ENCODE measurements at regions of chr3 and their contacts with region 1.

Region 1: GRCh38 chr3:131033480-131034080 is 6.9 kb downstream of the NEK11 start:
- DNase-seq: peak in 3 of 9 experiments; percentile 39 to 75 (median 67)
- ATAC-seq: peak; percentile 87
- H3K4me3 ChIP-seq: no peak overlapping the region
- H3K4me3 Mint-ChIP-seq: no peak overlapping the region
- H3K27ac ChIP-seq: no peak overlapping the region
- H3K27ac Mint-ChIP-seq: no peak overlapping the region
- H3K4me1 ChIP-seq: no peaks in the 10 kb centered on the region
- H3K4me1 Mint-ChIP-seq: no peaks in the 10 kb centered on the region
- H3K27me3 ChIP-seq: no peaks in the 10 kb centered on the region
- H3K27me3 Mint-ChIP-seq: no peaks in the 10 kb centered on the region
- CTCF ChIP-seq: peak; percentile 92

Region 2: GRCh38 chr3:130779031-130779430 is 254.5 kb before region 1 on chr3:
- CTCF ChIA-PET with region 1: no interaction called
- POLR2A ChIA-PET with region 1: no interaction called
- intact Hi-C with region 1: no loop called
- DNase-seq: no peak
- ATAC-seq: no peak
- H3K4me3 ChIP-seq: no peak overlapping the region
- H3K4me3 Mint-ChIP-seq: no peak overlapping the region
- H3K27ac ChIP-seq: no peak overlapping the region
- H3K27ac Mint-ChIP-seq: no peak overlapping the region
- H3K4me1 ChIP-seq: no peaks in the 10 kb centered on the region
- H3K4me1 Mint-ChIP-seq: no peaks in the 10 kb centered on the region
- H3K27me3 ChIP-seq: peaks cover 0 to 3% of the 10 kb centered on the region in 2 experiments
- H3K27me3 Mint-ChIP-seq: peaks cover 7% of the 10 kb centered on the region
- CTCF ChIP-seq: no peak

Region 3: GRCh38 chr3:131142580-131142979 is 109.0 kb after region 1 on chr3:
- CTCF ChIA-PET with region 1: no interaction called
- POLR2A ChIA-PET with region 1: no interaction called
- intact Hi-C with region 1: loop called in 1 of 2 experiments (anchors 1 kb)
- DNase-seq: no peak
- ATAC-seq: no peak
- H3K4me3 ChIP-seq: no peak overlapping the region
- H3K4me3 Mint-ChIP-seq: no peak overlapping the region
- H3K27ac ChIP-seq: no peak overlapping the region
- H3K27ac Mint-ChIP-seq: no peak overlapping the region
- H3K4me1 ChIP-seq: no peaks in the 10 kb centered on the region
- H3K4me1 Mint-ChIP-seq: no peaks in the 10 kb centered on the region
- H3K27me3 ChIP-seq: no peaks in the 10 kb centered on the region
- H3K27me3 Mint-ChIP-seq: no peaks in the 10 kb centered on the region
- CTCF ChIP-seq: no peak

Region 4: GRCh38 chr3:131794766-131795388 is 761.3 kb after region 1 on chr3:
- CTCF ChIA-PET with region 1: interaction called, 10 read pairs
- POLR2A ChIA-PET with region 1: no interaction called
- intact Hi-C with region 1: loop called (anchors 5 kb)
- DNase-seq: peak in 2 of 9 experiments; percentile 33 to 50
- ATAC-seq: no peak
- H3K4me3 ChIP-seq: no peak overlapping the region
- H3K4me3 Mint-ChIP-seq: no peak overlapping the region
- H3K27ac ChIP-seq: no peak overlapping the region
- H3K27ac Mint-ChIP-seq: no peak overlapping the region
- H3K4me1 ChIP-seq: no peaks in the 10 kb centered on the region
- H3K4me1 Mint-ChIP-seq: peaks cover 5% of the 10 kb centered on the region
- H3K27me3 ChIP-seq: no peaks in the 10 kb centered on the region
- H3K27me3 Mint-ChIP-seq: peaks cover 10% of the 10 kb centered on the region
- CTCF ChIP-seq: peak; percentile 67

Region 5: DNA sequence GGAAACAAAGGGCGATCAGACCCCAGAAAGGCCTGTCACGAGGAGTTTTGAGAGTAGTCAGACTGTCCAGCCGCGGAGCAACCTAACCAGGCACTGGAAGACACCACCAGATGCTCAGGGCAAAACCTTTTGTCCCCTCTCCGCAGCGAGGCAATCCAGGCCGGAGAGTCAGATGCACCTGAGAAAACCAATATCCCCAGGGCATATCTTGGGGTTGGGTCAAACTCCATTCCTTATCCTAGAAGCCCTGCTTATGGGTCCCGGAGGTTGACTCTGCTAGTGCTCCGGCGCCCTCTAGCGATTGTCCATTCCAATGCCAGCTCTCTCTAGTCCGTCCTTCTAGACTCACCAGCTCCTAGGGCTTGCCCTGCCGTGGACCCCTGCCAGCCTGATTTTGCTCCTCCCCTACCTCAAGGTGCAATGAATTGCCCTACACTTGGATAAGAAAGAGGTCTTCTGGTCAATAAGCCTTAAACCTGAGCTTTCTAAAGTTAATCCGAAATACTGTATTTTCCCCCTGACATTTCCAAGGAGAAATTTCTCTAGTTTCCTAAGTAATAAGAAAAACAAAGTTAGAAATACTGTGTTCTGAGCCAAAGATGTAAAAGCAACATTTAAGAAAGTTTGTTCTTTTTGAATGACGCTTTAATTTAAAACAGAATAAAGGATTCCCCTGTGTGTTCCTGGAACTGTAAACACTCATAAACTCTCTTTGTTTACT is 995.8 kb after region 1 on chr3:
- CTCF ChIA-PET with region 1: interaction called, 3 read pairs
- POLR2A ChIA-PET with region 1: no interaction called
- intact Hi-C with region 1: loop called in 1 of 2 experiments (anchors 5 kb)
- DNase-seq: peak in 7 of 9 experiments; percentile 8 to 44 (median 29)
- ATAC-seq: peak; percentile 42
- H3K4me3 ChIP-seq: no peak overlapping the region
- H3K4me3 Mint-ChIP-seq: no peak overlapping the region
- H3K27ac ChIP-seq: no peak overlapping the region
- H3K27ac Mint-ChIP-seq: no peak overlapping the region
- H3K4me1 ChIP-seq: no peaks in the 10 kb centered on the region
- H3K4me1 Mint-ChIP-seq: peaks cover 3% of the 10 kb centered on the region
- H3K27me3 ChIP-seq: peaks cover 0 to 7% of the 10 kb centered on the region in 2 experiments
- H3K27me3 Mint-ChIP-seq: peaks cover 47% of the 10 kb centered on the region
- CTCF ChIP-seq: peak; percentile 33

Region 6: DNA sequence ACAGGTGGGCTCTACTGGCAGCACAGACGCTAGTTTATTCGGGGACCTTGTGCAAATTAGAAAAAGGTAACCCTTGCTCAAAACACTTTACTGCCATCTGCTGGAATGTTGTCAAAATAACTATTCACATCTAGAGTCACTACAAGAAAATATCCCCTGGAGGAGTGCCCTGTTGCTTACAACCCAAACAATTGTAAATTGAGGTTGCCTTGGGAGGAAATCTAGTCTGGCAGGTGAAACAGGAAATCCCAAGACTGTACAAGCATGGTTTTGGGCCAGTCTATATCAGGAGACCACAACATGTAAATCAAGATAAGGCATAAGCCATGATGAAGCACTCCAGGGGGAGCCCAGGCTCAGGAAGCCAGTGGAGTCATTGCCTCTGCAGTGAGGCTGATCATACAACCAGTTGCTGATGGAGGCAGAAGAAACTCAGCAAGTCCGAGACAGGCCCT is 1146.8 kb after region 1 on chr3:
- CTCF ChIA-PET with region 1: no interaction called
- POLR2A ChIA-PET with region 1: no interaction called
- intact Hi-C with region 1: loop called in 1 of 2 experiments (anchors 5 kb)
- DNase-seq: peak in 2 of 9 experiments; percentile 37 to 52
- ATAC-seq: no peak
- H3K4me3 ChIP-seq: no peak overlapping the region
- H3K4me3 Mint-ChIP-seq: no peak overlapping the region
- H3K27ac ChIP-seq: no peak overlapping the region
- H3K27ac Mint-ChIP-seq: no peak overlapping the region
- H3K4me1 ChIP-seq: no peaks in the 10 kb centered on the region
- H3K4me1 Mint-ChIP-seq: peaks cover 5% of the 10 kb centered on the region
- H3K27me3 ChIP-seq: no peaks in the 10 kb centered on the region
- H3K27me3 Mint-ChIP-seq: no peaks in the 10 kb centered on the region
- CTCF ChIP-seq: peak; percentile 30

Region 7: DNA sequence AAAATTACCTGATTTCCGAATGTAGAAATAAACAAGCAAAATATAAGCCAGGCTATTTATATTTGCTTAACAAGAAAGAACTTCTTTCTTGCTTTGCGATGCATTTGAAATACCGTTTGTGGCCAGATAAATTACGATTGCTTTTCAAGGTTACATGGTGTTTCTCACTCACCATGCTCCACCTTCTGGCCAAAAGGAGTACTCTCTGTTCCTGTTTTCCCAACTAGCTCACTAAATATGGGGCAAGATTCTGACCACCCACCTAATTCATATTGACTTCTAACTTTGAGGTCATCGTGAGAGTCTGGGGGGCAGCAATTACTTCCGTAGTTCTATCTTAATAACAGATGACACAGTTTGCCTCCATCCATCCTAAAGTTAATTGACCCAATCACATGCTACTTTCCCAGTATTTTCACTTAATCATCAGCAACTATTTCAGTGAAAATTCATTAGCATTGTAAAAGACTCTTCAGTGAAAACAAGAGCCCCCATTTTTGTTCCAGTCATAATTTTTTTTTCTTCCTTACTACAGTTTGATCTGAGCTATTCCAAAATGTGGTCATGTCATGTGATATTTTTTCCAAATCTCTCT is 1309.5 kb after region 1 on chr3:
- CTCF ChIA-PET with region 1: no interaction called
- POLR2A ChIA-PET with region 1: no interaction called
- intact Hi-C with region 1: loop called (anchors 5 kb)
- DNase-seq: peak in 3 of 9 experiments; percentile 13 to 56 (median 47)
- ATAC-seq: no peak
- H3K4me3 ChIP-seq: no peak overlapping the region
- H3K4me3 Mint-ChIP-seq: no peak overlapping the region
- H3K27ac ChIP-seq: no peak overlapping the region
- H3K27ac Mint-ChIP-seq: no peak overlapping the region
- H3K4me1 ChIP-seq: no peaks in the 10 kb centered on the region
- H3K4me1 Mint-ChIP-seq: no peaks in the 10 kb centered on the region
- H3K27me3 ChIP-seq: peaks cover 0 to 3% of the 10 kb centered on the region in 2 experiments
- H3K27me3 Mint-ChIP-seq: peaks cover 7% of the 10 kb centered on the region
- CTCF ChIP-seq: peak; percentile 62

Measured in CD8-positive, alpha-beta T cell (primary cell).